HepG2 (cell line): ENCODE measurements at regions of chr9 and their contacts with region 1.

Region 1: GRCh38 chr9:121744002-121744686 is 92.7 kb downstream of the DAB2IP start:
- DNase-seq: peak; percentile 74
- ATAC-seq: peak; percentile 83
- H3K4me3 ChIP-seq: peak overlapping the region; percentile 70 to 85 (median 71)
- H3K27ac ChIP-seq: peak overlapping the region; percentile 48
- H3K4me1 ChIP-seq: peaks cover 91% of the 10 kb centered on the region
- H3K27me3 ChIP-seq: no peaks in the 10 kb centered on the region
- CTCF ChIP-seq: peak; percentile 94
- EP300 ChIP-seq: no peak
- POLR2A ChIP-seq: peak in 1 of 2 experiments; percentile 34; a peak in 1 of 4 replicates
- RAD21 ChIP-seq: peak; percentile 75

Region 2: GRCh38 chr9:121819428-121820231 is 75.5 kb after region 1 on chr9:
- CTCF ChIA-PET with region 1: no interaction called
- POLR2A ChIA-PET with region 1: no interaction called
- in situ Hi-C with region 1: no loop called
- intact Hi-C with region 1: loop called (anchors 10 kb)
- DNase-seq: no peak
- ATAC-seq: no peak
- H3K4me3 ChIP-seq: no peak overlapping the region
- H3K27ac ChIP-seq: no peak overlapping the region
- H3K4me1 ChIP-seq: peaks cover 2% of the 10 kb centered on the region; the same call in 1 of the 2 replicates
- H3K27me3 ChIP-seq: peaks cover 1 to 64% of the 10 kb centered on the region in 2 experiments; a peak in 4 of 5 replicates
- CTCF ChIP-seq: no peak
- EP300 ChIP-seq: no peak
- POLR2A ChIP-seq: no peak
- RAD21 ChIP-seq: no peak

Region 3: DNA sequence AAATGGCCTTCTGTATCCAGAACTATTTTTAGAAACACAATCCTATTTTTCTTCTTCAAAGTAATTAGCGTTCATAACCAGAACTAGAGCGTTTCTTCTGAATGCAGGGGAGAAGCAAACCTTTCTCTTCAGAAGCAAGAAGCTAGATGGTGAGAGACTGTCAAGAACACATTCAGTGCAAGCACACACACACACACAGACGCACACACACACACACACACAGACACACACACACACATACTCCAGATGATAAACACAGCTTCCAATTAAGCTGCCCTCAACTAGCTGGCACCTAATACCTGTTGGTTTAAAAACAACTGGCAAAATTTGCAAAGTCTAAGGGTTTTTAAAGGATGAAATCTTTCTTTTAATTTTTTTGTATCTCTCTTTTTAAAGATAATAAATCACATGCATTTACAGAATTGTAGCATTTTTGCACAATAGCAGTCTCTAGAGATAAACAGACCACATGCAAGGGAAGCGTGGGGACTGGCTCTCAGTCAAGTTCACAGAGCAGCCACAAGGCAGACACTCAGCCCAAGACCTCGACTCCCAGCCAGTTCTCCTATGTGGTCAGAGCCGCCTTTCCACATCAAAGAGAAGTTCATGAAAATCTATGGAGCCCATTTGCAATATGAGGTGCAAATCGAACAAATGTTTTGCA is 210.5 kb after region 1 on chr9:
- CTCF ChIA-PET with region 1: no interaction called
- POLR2A ChIA-PET with region 1: no interaction called
- in situ Hi-C with region 1: no loop called
- intact Hi-C with region 1: no loop called
- DNase-seq: no peak
- ATAC-seq: no peak
- H3K4me3 ChIP-seq: no peak overlapping the region
- H3K27ac ChIP-seq: no peak overlapping the region
- H3K4me1 ChIP-seq: peaks cover 6% of the 10 kb centered on the region; the same call in 1 of the 2 replicates
- H3K27me3 ChIP-seq: peaks cover 0 to 1% of the 10 kb centered on the region in 2 experiments; a peak in 1 of 5 replicates
- CTCF ChIP-seq: no peak
- EP300 ChIP-seq: no peak
- POLR2A ChIP-seq: no peak
- RAD21 ChIP-seq: no peak